Activated B cell treated with CpG ODN at 0.5 μM for 24 hours (primary cell): ENCODE measurements at regions of chr17 and their contacts with region 1.

Region 1: DNA sequence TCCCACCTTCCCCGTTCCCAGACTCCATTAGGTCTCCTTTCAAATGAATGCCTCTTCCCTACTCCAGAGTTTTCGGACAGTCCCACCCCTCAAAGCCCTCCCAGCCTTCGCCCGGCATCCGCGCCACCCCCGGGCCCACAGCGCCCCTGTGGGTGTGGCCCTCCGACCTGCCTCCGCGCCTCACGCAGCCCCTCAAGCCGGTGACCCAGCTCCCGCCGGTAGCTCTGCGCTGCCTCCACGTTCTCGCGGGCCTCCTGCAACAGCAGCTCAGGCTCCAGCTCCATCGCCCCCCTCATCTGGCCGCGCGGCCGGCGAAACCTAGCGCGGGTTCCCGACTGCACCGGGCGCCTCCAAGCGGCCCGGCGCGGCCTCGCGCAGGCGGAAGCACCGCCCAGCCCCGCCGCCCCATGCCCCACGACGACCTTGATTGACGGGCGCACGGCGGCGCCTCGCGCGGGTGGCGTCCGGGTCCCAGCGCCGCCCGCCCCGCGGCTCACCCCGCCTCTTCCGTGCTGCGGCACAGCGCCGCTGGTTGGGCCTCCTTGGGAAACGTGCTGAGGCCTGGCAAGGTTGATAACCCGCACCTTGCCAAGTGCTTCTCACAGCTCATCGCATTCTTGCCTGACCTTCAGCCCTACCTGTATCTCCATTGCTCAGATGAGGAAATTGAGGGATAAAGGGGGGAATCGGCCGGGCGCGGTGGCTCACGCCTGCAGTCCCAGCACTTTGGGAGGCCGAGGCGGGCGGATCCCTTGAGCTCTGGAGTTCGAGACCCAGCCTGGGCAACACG is at the start of gene CRLF3:
- DNase-seq: peak; percentile 89
- ATAC-seq: peak; percentile 93
- H3K4me3 Mint-ChIP-seq: peak within 1 kb of the TSS; percentile 93
- H3K27ac Mint-ChIP-seq: peak within 1 kb of the TSS; percentile 88
- H3K4me1 Mint-ChIP-seq: peaks cover 48% of the 10 kb centered on the region
- H3K27me3 Mint-ChIP-seq: no peaks in the 10 kb centered on the region
- CTCF ChIP-seq: no peak
- total RNA-seq, gene CRLF3: 53.5 and 54.9 TPM in 2 replicates

Region 2: GRCh38 chr17:29589524-29590410 is 1234.8 kb before region 1 on chr17 and contains the start of gene GIT1:
- CTCF ChIA-PET with region 1: no interaction called
- POLR2A ChIA-PET with region 1: no interaction called
- intact Hi-C with region 1: loop called (anchors 5 kb)
- DNase-seq: peak; percentile 88
- ATAC-seq: peak; percentile 83
- H3K4me3 Mint-ChIP-seq: peak within 1 kb of the TSS; percentile 87
- H3K27ac Mint-ChIP-seq: peak within 1 kb of the TSS; percentile 83
- H3K4me1 Mint-ChIP-seq: peaks cover 73% of the 10 kb centered on the region
- H3K27me3 Mint-ChIP-seq: no peaks in the 10 kb centered on the region
- CTCF ChIP-seq: no peak
- total RNA-seq, gene GIT1: 41.7 and 45.3 TPM in 2 replicates

Region 3: GRCh38 chr17:30291543-30292285 is 532.8 kb before region 1 on chr17 and contains the start of gene BLMH:
- CTCF ChIA-PET with region 1: no interaction called
- POLR2A ChIA-PET with region 1: no interaction called
- intact Hi-C with region 1: loop called (anchors 5 kb)
- DNase-seq: peak; percentile 74
- ATAC-seq: peak; percentile 97
- H3K4me3 Mint-ChIP-seq: peak within 1 kb of the TSS; percentile 91
- H3K27ac Mint-ChIP-seq: peak within 1 kb of the TSS; percentile 51
- H3K4me1 Mint-ChIP-seq: peaks cover 12% of the 10 kb centered on the region
- H3K27me3 Mint-ChIP-seq: no peaks in the 10 kb centered on the region
- CTCF ChIP-seq: no peak
- total RNA-seq, gene BLMH: 38.0 and 40.3 TPM in 2 replicates

Region 4: DNA sequence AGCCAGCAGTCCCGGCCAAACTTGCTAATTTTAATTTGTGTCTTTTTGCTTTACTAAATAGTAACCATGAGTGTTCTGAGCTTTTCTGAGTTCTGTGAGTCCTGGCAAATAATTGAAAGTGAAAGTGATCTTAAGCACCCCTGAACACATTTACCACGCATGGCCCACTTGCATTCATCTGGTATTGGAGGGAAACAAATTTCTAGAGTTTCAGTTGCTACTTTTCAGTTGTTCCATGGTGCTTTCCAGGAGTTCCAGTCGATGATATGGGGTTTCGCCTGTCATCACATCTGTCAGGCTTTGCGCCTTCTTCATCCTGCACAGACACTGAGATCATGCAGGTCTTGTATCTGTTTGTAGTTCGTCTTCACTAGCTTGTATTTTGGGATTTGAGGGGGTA is 44.2 kb before region 1 on chr17:
- CTCF ChIA-PET with region 1: no interaction called
- POLR2A ChIA-PET with region 1: interaction called, 4 read pairs
- intact Hi-C with region 1: loop called (anchors 5 kb)
- DNase-seq: no peak
- ATAC-seq: no peak
- H3K4me3 Mint-ChIP-seq: no peak overlapping the region
- H3K27ac Mint-ChIP-seq: peak overlapping the region; percentile 25
- H3K4me1 Mint-ChIP-seq: peaks cover 6% of the 10 kb centered on the region
- H3K27me3 Mint-ChIP-seq: no peaks in the 10 kb centered on the region
- CTCF ChIP-seq: no peak

Region 5: GRCh38 chr17:31321481-31321880 is 496.9 kb after region 1 on chr17 and contains the start of gene EVI2A:
- CTCF ChIA-PET with region 1: no interaction called
- POLR2A ChIA-PET with region 1: interaction called, 3 read pairs
- intact Hi-C with region 1: loop called (anchors 5 kb)
- DNase-seq: no peak
- ATAC-seq: peak; percentile 69
- H3K4me3 Mint-ChIP-seq: peak within 1 kb of the TSS; percentile 84
- H3K27ac Mint-ChIP-seq: peak within 1 kb of the TSS; percentile 96
- H3K4me1 Mint-ChIP-seq: peaks cover 41% of the 10 kb centered on the region
- H3K27me3 Mint-ChIP-seq: no peaks in the 10 kb centered on the region
- CTCF ChIP-seq: no peak
- total RNA-seq, gene EVI2A: 46.6 and 52.5 TPM in 2 replicates